ENCODE measurements at regions of chr10 and their contacts with region 1.

Region 1: DNA sequence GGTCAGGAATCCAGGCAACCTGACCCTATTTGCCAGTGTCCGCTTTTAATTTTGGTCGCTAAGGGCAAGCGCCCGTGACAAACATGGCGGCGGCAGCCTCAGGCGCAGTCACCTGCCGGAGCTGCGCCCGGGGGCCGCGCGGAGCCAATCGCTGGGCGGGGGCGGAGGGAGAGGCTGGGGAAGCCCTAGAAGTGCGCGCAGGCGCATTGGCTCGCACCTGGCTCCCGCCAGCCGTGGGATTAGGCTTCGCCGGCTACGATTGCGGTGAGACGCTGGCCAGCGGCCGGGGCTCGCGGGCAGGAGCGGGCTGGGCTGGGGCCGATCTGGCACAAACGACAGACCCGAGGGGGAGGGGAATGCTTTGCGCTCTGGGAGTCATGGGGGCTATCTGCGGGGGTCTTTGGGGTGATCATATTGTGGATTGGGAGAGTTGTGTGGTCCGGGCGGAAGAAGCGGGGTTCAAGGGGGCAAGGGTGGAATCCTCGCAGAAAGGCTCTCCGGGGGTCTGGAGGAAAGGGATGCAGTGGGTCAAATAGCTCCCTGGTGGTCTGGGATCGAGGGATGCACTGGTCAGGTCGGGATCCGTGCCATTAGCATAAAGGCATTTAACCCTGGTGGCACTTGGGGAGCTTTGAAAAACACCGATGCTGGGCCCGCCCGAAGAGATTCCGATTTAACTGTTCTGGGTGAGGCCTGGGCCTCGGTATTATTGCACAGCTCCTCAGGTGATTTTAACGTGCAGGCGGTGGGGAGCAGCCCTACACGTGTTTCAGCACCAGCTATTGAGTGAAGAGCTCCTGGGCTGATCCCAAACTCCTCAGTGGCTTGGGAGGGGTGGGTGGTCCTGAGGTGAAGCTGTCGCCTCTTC is 10.1 kb upstream of the C10orf95 start:
- DNase-seq: peak; percentile 97
- ATAC-seq: peak; percentile 98
- H3K4me3 Mint-ChIP-seq: peak overlapping the region; percentile 85
- H3K27ac Mint-ChIP-seq: peak overlapping the region; percentile 73
- H3K4me1 Mint-ChIP-seq: peaks cover 27% of the 10 kb centered on the region
- H3K27me3 Mint-ChIP-seq: no peaks in the 10 kb centered on the region

Region 2: DNA sequence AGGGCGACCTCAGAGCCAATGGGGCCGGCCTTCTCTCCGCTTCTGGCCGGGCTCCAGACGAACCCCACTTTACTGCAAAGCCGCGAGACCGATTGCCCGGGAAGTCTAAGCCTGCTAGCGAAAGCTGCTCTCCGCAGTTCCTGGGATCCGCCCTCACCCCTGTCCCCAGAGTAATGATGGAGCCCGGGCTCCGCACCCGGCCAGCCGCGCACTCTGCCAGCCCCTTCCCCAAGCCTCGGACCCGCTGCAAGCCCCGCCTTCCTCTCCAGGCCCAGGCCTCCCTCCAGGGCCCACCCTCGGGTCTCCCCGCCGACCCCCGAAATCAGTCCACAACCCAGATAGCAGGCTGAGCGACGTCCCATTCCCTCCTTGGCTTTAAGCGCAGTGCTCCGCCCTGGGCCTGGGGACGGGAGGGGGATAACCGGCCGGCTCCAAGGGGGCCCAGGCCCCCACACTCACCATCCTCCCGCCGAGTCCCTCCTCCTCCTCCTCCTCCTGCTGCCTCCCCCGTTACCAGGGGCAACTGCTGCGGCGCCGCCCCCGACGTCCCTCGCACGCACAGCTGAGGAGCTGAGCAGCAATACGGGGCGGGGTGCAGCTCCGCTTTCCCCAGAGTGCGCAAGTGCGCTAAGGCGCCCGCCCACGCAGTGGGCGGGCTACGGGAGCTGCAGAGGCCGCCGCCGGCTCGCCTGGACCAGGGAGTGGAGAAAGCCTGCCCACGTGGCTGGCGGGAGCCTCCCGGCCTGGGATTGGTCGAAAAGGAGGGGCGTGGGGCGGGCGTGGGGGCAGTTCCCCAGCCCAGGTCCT is 252.6 kb after region 1 on chr10 and contains the start of gene ARL3:
- CTCF ChIA-PET with region 1: no interaction called
- POLR2A ChIA-PET with region 1: no interaction called
- intact Hi-C with region 1: loop called in 1 of 2 experiments (anchors 5 kb)
- DNase-seq: peak; percentile 99
- ATAC-seq: peak; percentile 90
- H3K4me3 Mint-ChIP-seq: peak within 1 kb of the TSS; percentile 82
- H3K27ac Mint-ChIP-seq: peak within 1 kb of the TSS; percentile 81
- H3K4me1 Mint-ChIP-seq: peaks cover 59% of the 10 kb centered on the region
- H3K27me3 Mint-ChIP-seq: no peaks in the 10 kb centered on the region
- total RNA-seq, gene ARL3: 6.4 to 6.9 TPM

Measured in activated CD4-positive, alpha-beta T cell treated with anti-CD3 and anti-CD28 coated beads for 36 hours (primary cell).